Posterior vena cava (tissue), 2 donors: ENCODE measurements at regions of chr3 and their contacts with region 1.

Region 1: GRCh38 chr3:43389388-43390254 is 103.3 kb downstream of the SNRK start:
- DNase-seq: no peak

Region 2: DNA sequence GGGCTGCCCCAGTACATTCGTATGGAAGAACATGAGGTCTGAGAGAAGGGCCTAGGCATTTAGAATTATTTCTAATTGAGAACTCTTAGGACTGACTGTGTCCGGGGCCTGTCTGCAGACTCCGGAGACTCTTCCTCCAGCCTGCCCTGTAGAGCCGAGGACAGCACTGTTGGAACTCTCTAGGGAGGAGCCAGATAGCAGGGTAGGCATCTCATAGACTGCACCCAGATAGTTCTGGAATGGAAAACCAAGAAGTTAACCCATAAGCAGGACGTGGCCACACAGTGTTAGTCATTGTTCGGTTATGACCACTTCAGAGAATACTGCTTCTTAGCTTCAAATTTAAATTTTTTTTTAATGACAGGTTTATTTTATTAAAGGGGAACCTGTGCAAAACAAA is 43.7 kb before region 1 on chr3:
- intact Hi-C with region 1: loop called in 1 of 2 experiments (anchors 2 kb)
- DNase-seq: no peak